ENCODE measurements at regions of chr3 and their contacts with region 1.

Region 1: DNA sequence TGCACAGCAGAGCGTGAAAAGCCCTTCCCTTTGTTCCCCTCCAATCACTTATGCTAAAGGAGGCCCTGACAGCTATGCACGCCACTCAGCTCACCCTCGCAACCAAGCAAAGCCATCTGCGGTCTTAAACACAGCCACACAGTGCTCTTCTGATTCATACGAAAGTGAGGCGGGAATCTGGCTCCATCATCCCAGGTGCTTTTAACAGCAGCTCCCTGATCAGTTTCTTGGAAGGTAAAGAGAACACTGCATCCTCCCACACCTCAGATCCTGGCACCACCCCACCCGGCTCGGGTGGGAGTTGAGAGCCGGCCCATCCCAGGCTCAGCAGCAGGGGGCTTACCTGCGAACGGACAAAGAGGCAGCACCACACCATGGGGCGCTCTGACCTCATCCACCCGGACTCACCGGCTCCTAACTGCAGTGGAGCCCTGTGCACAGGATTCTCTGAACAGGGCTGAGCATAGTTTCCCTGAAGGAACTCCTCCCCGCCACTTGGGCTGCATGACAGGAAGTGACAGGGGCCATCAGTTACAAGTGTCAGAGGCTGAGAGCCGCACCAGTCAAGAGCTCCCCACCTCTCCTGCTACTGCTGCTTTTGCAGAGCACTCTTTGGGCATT is 114.3 kb upstream of the ARHGEF3 start:
- DNase-seq: peak; percentile 87
- ATAC-seq: peak; percentile 86
- H3K4me3 Mint-ChIP-seq: peak overlapping the region; percentile 73
- H3K27ac Mint-ChIP-seq: peak overlapping the region; percentile 79
- H3K4me1 Mint-ChIP-seq: peaks cover 68% of the 10 kb centered on the region
- H3K27me3 Mint-ChIP-seq: no peaks in the 10 kb centered on the region

Region 2: GRCh38 chr3:56269755-56270535 is 646.1 kb before region 1 on chr3:
- CTCF ChIA-PET with region 1: no interaction called
- POLR2A ChIA-PET with region 1: no interaction called
- intact Hi-C with region 1: no loop called
- DNase-seq: no peak
- ATAC-seq: no peak
- H3K4me3 Mint-ChIP-seq: no peak overlapping the region
- H3K27ac Mint-ChIP-seq: no peak overlapping the region
- H3K4me1 Mint-ChIP-seq: no peaks in the 10 kb centered on the region
- H3K27me3 Mint-ChIP-seq: peaks cover 10% of the 10 kb centered on the region

Region 3: GRCh38 chr3:56702490-56703315 is 213.4 kb before region 1 on chr3:
- CTCF ChIA-PET with region 1: no interaction called
- POLR2A ChIA-PET with region 1: no interaction called
- intact Hi-C with region 1: loop called in 1 of 2 experiments (anchors 5 kb)
- DNase-seq: peak; percentile 60
- ATAC-seq: peak; percentile 64
- H3K4me3 Mint-ChIP-seq: no peak overlapping the region
- H3K27ac Mint-ChIP-seq: no peak overlapping the region
- H3K4me1 Mint-ChIP-seq: peaks cover 21% of the 10 kb centered on the region
- H3K27me3 Mint-ChIP-seq: no peaks in the 10 kb centered on the region

Region 4: GRCh38 chr3:56862352-56863074 is 53.6 kb before region 1 on chr3:
- CTCF ChIA-PET with region 1: interaction called, 4 read pairs
- POLR2A ChIA-PET with region 1: interaction called, 10 read pairs
- intact Hi-C with region 1: loop called (anchors 1 to 2 kb)
- DNase-seq: peak; percentile 41
- ATAC-seq: peak; percentile 70
- H3K4me3 Mint-ChIP-seq: peak overlapping the region; percentile 32
- H3K27ac Mint-ChIP-seq: peak overlapping the region; percentile 85
- H3K4me1 Mint-ChIP-seq: peaks cover 80% of the 10 kb centered on the region
- H3K27me3 Mint-ChIP-seq: no peaks in the 10 kb centered on the region

Region 5: GRCh38 chr3:56894881-56895431 is 21.1 kb before region 1 on chr3:
- CTCF ChIA-PET with region 1: interaction called, 7 read pairs
- POLR2A ChIA-PET with region 1: no interaction called
- intact Hi-C with region 1: loop called (anchors 1 kb)
- DNase-seq: peak; percentile 60
- ATAC-seq: peak; percentile 72
- H3K4me3 Mint-ChIP-seq: peak overlapping the region; percentile 29
- H3K27ac Mint-ChIP-seq: no peak overlapping the region
- H3K4me1 Mint-ChIP-seq: peaks cover 66% of the 10 kb centered on the region
- H3K27me3 Mint-ChIP-seq: no peaks in the 10 kb centered on the region

Region 6: DNA sequence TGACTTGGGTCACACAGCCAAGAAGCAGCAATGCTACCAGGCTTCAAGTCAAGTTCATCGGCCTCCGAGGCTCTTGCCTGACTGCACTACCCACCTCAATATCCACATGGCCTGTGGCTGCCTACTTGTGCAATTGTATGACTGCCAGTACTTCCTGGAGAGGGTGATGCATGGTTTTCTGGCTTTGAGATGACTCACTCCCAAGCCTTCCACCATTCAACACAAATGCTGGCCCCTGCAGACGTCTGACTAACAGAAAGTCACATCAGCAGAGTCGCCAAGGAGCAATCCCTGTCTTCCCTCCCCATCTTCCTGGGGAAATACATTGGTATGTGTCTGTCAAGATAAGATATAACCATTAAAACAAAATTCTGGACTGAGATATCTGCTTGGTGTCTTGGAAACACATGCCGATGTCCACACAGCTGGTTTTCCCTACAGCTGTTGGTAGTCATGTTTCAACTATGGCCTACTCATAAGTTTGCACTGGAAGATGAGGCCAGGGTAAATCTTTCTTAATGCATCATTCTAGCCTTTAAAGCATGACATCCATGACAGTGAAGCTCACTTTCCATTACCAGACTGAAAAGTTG is 64.8 kb after region 1 on chr3:
- CTCF ChIA-PET with region 1: interaction called, 3 read pairs
- POLR2A ChIA-PET with region 1: no interaction called
- intact Hi-C with region 1: loop called (anchors 1 to 2 kb)
- DNase-seq: peak; percentile 82
- ATAC-seq: peak; percentile 95
- H3K4me3 Mint-ChIP-seq: no peak overlapping the region
- H3K27ac Mint-ChIP-seq: peak overlapping the region; percentile 78
- H3K4me1 Mint-ChIP-seq: peaks cover 23% of the 10 kb centered on the region
- H3K27me3 Mint-ChIP-seq: no peaks in the 10 kb centered on the region